Activated naive CD4-positive, alpha-beta T cell treated with anti-CD3 and anti-CD28 coated beads for 36 hours (primary cell): ENCODE measurements at regions of chr19 and their contacts with region 1.

Region 1: DNA sequence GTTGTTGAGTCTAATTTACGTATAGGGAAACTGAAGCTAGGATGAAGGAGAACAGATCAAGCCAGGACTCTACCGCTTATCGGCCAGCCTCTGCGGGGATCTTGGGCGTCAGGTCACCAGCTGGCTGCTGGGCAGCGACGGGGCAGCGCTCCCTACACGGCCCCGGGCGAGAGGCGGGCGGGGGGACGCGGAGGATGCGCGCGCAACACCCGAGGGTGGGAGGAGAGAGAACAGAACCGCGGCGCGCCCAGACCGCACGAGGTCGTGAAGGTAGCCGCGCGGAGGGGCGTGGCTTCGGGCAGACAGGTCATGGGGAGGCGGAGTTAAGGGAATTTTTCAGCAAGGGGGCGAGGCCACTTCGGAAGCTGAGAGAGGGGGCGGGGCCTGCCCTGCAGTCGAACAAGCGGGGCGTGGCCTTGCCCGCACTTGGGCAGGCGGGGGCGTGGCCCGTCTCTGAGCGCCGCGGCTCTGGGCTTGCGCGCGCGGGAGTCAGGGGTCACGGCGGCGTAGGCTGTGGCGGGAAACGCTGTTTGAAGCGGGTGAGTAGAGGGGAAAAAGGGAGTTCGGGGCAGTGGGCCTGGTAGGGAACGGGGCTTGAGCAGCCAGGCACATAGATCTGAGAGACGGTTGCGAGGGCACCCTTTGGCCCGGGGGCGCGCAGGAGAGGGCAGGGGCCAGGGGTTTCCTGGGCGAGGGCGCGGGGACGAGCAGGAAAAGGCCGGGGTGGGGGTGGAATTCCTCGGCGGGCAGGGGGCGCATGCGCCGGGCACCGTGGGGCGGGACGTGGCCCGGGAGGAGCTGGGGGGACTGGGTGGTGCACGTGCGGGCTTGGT is at the start of gene POLD1:
- DNase-seq: peak; percentile 99
- H3K4me3 Mint-ChIP-seq: peak within 1 kb of the TSS; percentile 98
- H3K27ac Mint-ChIP-seq: peak within 1 kb of the TSS; percentile 95
- H3K4me1 Mint-ChIP-seq: peaks cover 36% of the 10 kb centered on the region
- H3K27me3 Mint-ChIP-seq: no peaks in the 10 kb centered on the region
- total RNA-seq, gene POLD1: 221 to 224 TPM

Region 2: GRCh38 chr19:50334741-50335421 is 49.2 kb before region 1 on chr19:
- CTCF ChIA-PET with region 1: no interaction called
- intact Hi-C with region 1: no loop called
- DNase-seq: no peak
- H3K4me3 Mint-ChIP-seq: no peak overlapping the region
- H3K27ac Mint-ChIP-seq: peak overlapping the region; percentile 7
- H3K4me1 Mint-ChIP-seq: peaks cover 52% of the 10 kb centered on the region
- H3K27me3 Mint-ChIP-seq: peaks cover 30% of the 10 kb centered on the region

Region 3: DNA sequence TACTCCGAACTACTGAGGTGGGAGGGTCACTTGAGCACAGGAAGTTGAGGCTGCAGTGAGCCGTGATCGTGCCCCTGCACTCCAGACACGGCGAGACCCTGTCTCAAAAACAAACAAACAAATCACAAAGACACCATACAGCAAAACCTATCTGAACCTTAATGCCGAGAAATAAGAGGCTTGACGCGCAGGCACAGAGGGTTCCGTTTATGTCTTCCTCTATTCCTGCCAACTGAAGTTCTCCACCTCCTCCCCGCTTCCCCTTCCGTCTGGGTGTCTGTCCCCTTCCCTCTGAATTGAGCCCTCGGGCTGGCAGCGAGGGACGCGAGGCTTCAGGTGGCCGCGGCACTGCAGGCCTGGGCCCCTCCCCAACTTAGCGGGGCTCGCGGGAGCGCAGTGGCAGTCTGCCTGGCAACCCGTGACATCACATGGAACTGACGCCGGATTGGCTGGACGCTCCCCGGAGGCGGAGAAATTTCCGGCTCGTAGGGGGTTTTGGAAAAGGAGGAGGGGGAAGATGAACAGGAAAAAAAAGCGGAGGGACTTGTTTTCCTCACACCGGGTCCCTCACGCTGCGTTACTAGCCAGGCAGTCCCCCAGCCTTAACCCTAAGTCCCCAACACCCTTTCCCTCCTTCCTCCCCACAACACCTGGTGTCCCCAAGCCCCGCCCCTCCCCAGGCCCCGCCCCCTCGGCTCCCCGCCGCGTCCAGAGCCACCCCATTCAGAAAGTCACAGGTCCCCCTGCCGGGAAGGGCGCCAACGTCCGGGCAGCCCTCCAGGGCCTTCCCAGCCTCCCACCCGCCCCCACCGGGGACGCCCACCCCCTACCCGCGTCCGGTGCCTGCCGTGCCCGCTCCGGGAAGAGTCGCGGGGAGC is 47.5 kb after region 1 on chr19:
- CTCF ChIA-PET with region 1: no interaction called
- intact Hi-C with region 1: loop called (anchors 2 kb)
- DNase-seq: peak; percentile 93
- H3K4me3 Mint-ChIP-seq: peak overlapping the region; percentile 90
- H3K27ac Mint-ChIP-seq: peak overlapping the region; percentile 88
- H3K4me1 Mint-ChIP-seq: peaks cover 17% of the 10 kb centered on the region
- H3K27me3 Mint-ChIP-seq: peaks cover 11% of the 10 kb centered on the region